Ascending aorta (tissue), 2 donors: ENCODE measurements at regions of chr6 and their contacts with region 1.

Region 1: GRCh38 chr6:37169496-37170272 is at the start of gene PIM1:
- DNase-seq: peak; percentile 96 to 99
- H3K4me3 ChIP-seq: peak within 1 kb of the TSS; percentile 91 to 92
- H3K27ac ChIP-seq: peak within 1 kb of the TSS; percentile 97
- H3K4me1 ChIP-seq: peaks cover 0 to 18% of the 10 kb centered on the region in 2 donors
- H3K27me3 ChIP-seq: no peaks in the 10 kb centered on the region
- CTCF ChIP-seq: no peak
- total RNA-seq, gene PIM1: 17.7 TPM

Region 2: GRCh38 chr6:36975231-36976006 is 194.3 kb before region 1 on chr6:
- intact Hi-C with region 1: no loop called
- DNase-seq: no peak
- H3K4me3 ChIP-seq: no peak overlapping the region
- H3K27ac ChIP-seq: peak overlapping the region in 1 of 2 donors; percentile 1
- H3K4me1 ChIP-seq: peaks cover 0 to 6% of the 10 kb centered on the region in 2 donors
- H3K27me3 ChIP-seq: no peaks in the 10 kb centered on the region
- CTCF ChIP-seq: no peak

Region 3: GRCh38 chr6:36985808-36986703 is 183.6 kb before region 1 on chr6 and contains the start of gene MTCH1:
- intact Hi-C with region 1: loop called (anchors 2 kb)
- DNase-seq: peak; percentile 51 to 94
- H3K4me3 ChIP-seq: peak within 1 kb of the TSS; percentile 82 to 100
- H3K27ac ChIP-seq: peak within 1 kb of the TSS; percentile 97 to 99
- H3K4me1 ChIP-seq: peaks cover 11 to 32% of the 10 kb centered on the region in 2 donors
- H3K27me3 ChIP-seq: no peaks in the 10 kb centered on the region
- CTCF ChIP-seq: no peak
- total RNA-seq, gene MTCH1: 175 TPM

Region 4: DNA sequence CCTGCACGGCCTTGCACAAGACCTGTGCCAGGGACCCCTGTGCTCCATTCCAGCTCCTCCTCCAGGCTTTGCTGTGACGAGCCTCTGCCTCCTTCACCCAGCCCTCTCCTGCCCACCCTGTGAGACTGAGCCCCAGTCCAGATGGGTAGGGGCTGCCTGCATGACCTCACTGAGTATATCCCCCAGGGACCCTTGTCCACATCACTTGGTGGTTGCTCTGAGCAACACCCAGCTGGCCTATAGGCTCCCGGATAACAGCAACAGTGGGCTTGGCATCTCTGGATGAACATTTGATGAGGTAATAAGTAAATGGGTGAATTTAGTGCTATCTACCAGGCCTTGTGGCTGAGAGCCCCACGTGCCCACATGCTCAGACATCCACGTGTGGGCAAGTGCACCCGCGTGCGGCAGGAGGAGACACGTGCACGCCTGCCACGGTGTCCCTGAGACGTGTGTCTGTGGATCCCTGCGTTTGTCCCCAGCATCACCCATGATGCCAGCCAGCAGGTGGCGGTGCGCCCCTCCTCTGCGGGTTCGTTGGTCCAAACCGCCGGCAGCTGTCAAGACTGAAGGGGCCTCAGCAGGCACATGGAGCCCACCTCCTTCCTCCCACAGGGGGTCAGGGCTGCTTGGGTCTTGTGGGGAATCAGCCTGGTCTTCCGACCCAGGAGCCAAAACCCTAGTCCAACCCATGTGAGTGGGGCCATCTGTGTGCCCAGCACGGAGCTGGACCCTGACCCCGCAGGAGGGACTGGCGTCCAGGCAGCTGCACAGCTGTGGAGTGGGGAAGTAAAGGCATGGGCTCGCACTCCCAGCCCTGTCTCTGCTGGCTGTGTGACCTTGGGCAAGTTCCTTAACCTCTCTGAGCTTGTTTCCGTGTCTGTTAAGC is 118.3 kb before region 1 on chr6:
- intact Hi-C with region 1: loop called (anchors 1 kb)
- DNase-seq: peak; percentile 63 to 92
- H3K4me3 ChIP-seq: no peak overlapping the region
- H3K27ac ChIP-seq: no peak overlapping the region
- H3K4me1 ChIP-seq: peaks cover 0 to 6% of the 10 kb centered on the region in 2 donors
- H3K27me3 ChIP-seq: no peaks in the 10 kb centered on the region
- CTCF ChIP-seq: peak; percentile 88 to 92 (median 92)

Region 5: DNA sequence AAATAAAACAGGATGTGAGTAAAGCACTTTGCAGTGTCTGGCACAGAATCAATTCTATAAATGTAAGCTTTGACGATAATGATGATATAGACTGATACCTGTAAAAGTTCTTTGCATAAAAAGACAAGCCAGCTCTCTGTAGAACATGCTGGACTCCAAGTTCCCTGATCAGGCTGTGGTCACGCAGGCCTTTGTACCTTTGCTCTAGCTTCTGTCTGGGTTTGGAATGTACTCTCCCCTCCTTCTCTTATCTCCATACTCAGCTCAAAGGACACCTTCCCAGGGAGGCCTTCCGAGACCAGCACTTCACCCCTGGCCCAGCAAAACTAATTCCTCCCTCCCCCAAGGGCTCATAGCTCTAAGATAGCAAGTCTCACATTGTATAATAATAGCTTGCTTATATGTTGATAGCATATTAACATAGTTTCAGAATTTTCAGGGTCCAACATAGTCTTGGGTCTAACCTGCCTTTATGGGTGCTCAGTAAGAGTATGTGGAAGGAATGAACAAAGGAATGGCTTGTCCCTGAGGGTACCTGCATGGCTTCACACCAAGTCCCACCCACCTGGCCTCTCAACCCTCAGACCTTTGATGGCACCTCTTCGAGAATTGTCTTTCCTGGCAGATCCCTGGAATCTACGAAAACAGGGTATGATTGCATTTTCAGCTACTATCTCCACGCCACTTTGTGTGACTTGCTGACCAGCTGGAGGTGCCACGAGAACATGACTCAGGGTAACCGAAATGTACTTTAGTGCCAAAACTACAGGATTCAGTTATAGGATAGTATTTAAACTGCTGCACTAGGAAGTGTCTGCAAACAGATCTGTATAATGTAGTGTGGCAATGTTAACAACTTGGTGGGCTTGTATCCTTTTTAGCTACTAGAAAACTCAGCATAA is 41.5 kb before region 1 on chr6:
- intact Hi-C with region 1: loop called (anchors 1 kb)
- DNase-seq: no peak
- H3K4me3 ChIP-seq: no peak overlapping the region
- H3K27ac ChIP-seq: no peak overlapping the region
- H3K4me1 ChIP-seq: peaks cover 0 to 3% of the 10 kb centered on the region in 2 donors
- H3K27me3 ChIP-seq: no peaks in the 10 kb centered on the region
- CTCF ChIP-seq: peak in 1 of 3 experiments; percentile 55

Region 6: DNA sequence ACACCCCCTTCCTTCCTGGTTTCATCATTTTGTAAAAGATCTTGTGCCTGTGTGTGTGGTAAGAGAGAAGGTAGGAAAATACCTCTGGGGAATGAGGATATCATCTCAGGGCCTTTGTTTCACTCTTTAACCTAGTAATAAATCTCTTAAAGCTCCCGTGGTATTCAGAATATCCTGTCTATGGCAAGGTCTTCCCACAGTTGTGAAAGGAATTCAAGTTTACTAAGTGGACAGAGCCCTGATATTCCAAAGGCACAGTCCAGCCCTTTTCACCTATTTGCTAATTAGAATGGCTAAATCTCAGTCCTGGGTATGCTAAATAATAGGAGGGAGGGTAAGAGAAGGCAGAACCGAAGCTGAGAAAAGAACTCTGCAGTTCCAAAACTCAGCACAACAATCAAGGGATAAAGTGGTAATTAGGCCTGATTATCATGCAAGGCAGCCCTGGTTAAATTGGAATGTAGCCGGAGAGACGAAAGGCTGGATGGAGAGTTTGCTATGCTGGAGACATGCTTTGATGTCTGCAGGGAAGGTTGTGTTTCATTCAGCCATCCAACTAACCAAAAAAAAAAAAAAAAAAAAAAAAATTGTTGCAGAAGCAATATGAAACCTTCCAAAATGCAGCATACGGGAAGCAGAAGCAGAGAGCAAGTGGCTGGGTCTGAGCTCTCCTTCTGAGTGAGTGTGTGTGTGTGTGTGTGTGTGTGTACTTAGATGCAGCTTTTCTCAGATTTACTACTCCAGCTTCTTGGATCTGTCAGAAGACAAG is 28.2 kb before region 1 on chr6:
- intact Hi-C with region 1: loop called (anchors 1 kb)
- DNase-seq: no peak
- H3K4me3 ChIP-seq: no peak overlapping the region
- H3K27ac ChIP-seq: no peak overlapping the region
- H3K4me1 ChIP-seq: peaks cover 9 to 34% of the 10 kb centered on the region in 2 donors
- H3K27me3 ChIP-seq: no peaks in the 10 kb centered on the region
- CTCF ChIP-seq: no peak